PC-9 (cell line): ENCODE measurements at regions of chr2 and their contacts with region 1.

Region 1: GRCh38 chr2:74919827-74920226 is 38.6 kb upstream of the POLE4 start:
- DNase-seq: peak; percentile 42 to 64
- H3K4me3 ChIP-seq: peak overlapping the region; percentile 60
- H3K27ac ChIP-seq: no peak overlapping the region
- H3K4me1 ChIP-seq: peaks cover 30% of the 10 kb centered on the region
- H3K27me3 ChIP-seq: no peaks in the 10 kb centered on the region
- CTCF ChIP-seq: peak; percentile 89

Region 2: DNA sequence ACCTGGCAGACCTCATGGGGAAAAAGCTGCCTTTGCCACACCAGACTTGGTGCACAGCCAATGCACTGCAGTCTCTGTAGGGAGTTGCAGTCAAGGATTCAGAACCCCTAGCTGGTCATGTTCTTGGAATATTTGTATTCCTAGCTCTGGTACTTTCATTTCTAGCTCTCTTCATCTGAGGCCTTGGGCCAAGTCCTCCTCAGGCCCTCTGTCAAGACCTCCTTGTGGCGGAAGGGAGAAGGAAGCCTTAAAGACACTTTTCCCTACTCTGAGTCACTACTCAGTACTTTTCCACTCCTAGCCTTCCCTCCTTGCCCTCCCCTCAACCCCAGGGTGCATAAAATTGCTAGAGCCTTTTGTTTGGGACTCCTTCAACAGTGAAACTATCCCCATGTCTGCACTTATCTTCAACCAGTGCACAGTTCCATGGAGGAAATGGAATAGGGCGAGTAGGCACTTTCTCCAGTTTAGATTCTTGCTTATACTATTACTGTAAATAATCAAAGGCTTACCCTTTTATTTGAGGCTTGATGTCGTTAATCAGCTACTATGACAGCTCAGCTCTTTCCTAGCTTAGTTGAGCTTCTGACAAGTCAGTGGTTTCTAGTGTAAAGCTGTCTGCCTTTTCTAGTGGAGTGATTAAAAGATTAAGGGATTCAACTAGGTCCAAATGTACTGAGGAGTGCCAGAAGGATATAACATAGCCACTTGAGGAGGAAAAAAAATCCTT is 287.5 kb before region 1 on chr2:
- CTCF ChIA-PET with region 1: interaction called, 12 read pairs
- POLR2A ChIA-PET with region 1: no interaction called
- intact Hi-C with region 1: no loop called
- DNase-seq: peak in 1 of 2 experiments; percentile 44
- H3K4me3 ChIP-seq: no peak overlapping the region
- H3K27ac ChIP-seq: no peak overlapping the region
- H3K4me1 ChIP-seq: peaks cover 11% of the 10 kb centered on the region
- H3K27me3 ChIP-seq: no peaks in the 10 kb centered on the region
- CTCF ChIP-seq: no peak

Region 3: DNA sequence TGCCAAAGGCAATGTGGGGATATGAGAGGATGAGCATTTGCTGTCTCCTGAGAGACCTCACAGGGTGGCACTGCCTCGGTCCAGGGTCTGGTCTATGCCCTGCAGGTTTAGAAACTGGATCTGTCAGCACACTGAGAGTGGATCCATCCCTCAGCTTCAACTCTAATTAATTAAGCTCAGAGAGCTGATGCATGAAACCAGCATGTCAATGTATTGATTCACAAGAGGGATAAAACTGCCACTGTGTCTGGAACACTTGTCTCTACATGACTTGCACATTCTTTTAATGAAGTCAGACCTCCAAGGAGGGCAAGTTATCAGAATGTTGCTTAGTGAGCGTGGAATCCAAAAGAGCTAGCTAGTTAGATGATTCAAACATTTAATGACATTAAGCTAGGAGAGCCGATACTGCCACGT is 16.2 kb after region 1 on chr2:
- CTCF ChIA-PET with region 1: no interaction called
- POLR2A ChIA-PET with region 1: no interaction called
- intact Hi-C with region 1: no loop called
- DNase-seq: no peak
- H3K4me3 ChIP-seq: no peak overlapping the region
- H3K27ac ChIP-seq: no peak overlapping the region
- H3K4me1 ChIP-seq: no peaks in the 10 kb centered on the region
- H3K27me3 ChIP-seq: no peaks in the 10 kb centered on the region
- CTCF ChIP-seq: no peak

Region 4: DNA sequence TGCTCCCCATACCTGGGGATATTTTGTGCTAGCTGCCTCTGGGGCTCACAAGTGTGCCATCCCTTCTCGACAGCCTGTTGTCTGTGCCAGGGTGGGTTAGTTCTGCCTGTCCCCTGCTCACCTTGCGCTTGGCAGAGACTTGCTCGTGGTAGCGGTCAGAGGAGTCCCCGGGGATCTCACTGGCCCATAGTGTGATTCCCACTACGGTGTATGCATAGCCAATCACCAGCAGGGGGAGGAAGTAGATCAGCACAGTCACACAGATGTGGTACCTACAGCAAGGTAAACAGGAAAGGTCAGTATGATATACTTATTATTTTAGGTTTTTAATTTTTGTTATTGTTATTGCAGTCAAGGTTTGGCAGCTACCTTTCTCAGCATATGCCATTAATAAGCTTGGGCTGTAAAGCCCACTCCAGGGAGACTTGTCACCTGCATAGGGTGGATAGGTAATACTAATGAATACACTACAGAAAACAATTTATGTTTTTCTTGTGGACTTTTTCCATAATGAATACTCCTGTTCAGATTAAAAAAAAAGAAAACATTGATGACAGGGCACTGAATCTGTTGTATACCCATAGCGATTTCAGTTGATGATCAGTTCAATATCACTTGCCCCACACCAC is 133.8 kb after region 1 on chr2:
- CTCF ChIA-PET with region 1: interaction called, 3 read pairs
- POLR2A ChIA-PET with region 1: no interaction called
- intact Hi-C with region 1: loop called (anchors 10 kb)
- DNase-seq: peak; percentile 37 to 57
- H3K4me3 ChIP-seq: no peak overlapping the region
- H3K27ac ChIP-seq: no peak overlapping the region
- H3K4me1 ChIP-seq: no peaks in the 10 kb centered on the region
- H3K27me3 ChIP-seq: no peaks in the 10 kb centered on the region
- CTCF ChIP-seq: peak; percentile 93

Region 5: DNA sequence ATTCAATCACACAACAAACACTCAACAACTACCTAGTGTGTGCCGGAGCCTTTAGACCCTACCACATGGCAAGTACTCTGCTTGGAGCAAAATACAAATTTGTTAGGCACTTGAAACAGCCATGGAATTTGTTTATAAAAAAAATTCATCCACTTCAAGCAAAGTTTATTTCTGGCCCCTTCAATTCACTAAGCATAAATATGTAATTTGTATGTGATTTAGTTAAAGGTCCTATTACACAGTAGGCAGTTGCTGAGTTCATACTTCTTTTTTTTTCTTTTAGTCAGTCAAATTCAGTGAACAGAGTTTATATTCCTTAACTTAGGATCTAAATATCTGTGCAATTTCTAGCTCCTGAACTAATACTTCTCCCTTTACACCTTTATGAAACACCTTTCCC is 768.4 kb after region 1 on chr2:
- CTCF ChIA-PET with region 1: no interaction called
- POLR2A ChIA-PET with region 1: no interaction called
- intact Hi-C with region 1: no loop called
- DNase-seq: no peak
- H3K4me3 ChIP-seq: no peak overlapping the region
- H3K27ac ChIP-seq: no peak overlapping the region
- H3K4me1 ChIP-seq: no peaks in the 10 kb centered on the region
- H3K27me3 ChIP-seq: no peaks in the 10 kb centered on the region
- CTCF ChIP-seq: no peak